ENCODE measurements at regions of chr17 and their contacts with region 1.

Region 1: DNA sequence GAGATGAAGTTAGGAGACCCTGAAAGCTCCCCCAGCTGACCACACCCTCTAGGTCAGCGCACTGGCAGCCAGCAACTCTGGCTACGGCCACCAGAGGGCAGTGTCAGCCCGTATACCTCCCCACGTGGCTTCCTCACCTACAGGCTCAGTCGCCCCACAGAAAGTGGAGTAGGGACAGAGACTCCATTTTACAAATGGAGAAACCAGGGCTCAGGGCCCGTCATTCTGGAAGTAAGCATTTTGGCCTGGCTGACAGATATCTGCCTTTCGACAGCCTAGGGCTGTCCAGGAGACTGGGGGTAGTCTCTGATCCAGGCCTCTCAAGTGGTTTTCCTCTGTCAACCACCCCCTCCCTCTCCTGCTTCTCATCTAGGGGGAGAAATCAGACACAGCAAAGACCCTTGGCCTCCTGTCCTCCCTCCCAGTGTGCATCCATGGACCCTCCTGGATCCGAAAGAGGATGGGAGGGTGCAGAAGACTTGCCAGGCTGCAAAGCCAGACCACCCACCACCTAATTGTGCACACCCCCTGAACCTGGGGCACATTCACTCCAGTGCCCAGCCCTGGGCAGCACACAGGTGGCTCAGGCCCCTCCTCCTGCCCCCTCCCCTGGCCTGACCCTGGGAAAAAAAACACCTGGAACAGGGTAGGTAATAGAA is 3.8 kb upstream of the HAP1 start:
- ATAC-seq: peak; percentile 57 to 82 (median 68)
- H3K4me3 ChIP-seq: peak overlapping the region in 1 of 5 donors; percentile 2
- H3K27ac ChIP-seq: no peak overlapping the region
- H3K4me1 ChIP-seq: peaks cover 3 to 7% of the 10 kb centered on the region in 2 donors

Region 2: GRCh38 chr17:41464682-41465081 is 273.5 kb before region 1 on chr17:
- in situ Hi-C with region 1: no loop called
- ATAC-seq: peak in 3 of 8 experiments; percentile 29 to 99 (median 65)
- H3K4me3 ChIP-seq: no peak overlapping the region
- H3K27ac ChIP-seq: no peak overlapping the region
- H3K4me1 ChIP-seq: no peaks in the 10 kb centered on the region

Region 3: GRCh38 chr17:41792845-41793783 is 54.9 kb after region 1 on chr17:
- in situ Hi-C with region 1: loop called in 1 of 9 experiments (anchors 10 kb)
- ATAC-seq: peak; percentile 57 to 92 (median 88)
- H3K4me3 ChIP-seq: no peak overlapping the region
- H3K27ac ChIP-seq: peak overlapping the region in 1 of 2 donors; percentile 57
- H3K4me1 ChIP-seq: peaks cover 18 to 19% of the 10 kb centered on the region in 2 donors

Region 4: GRCh38 chr17:41801374-41802271 is 63.4 kb after region 1 on chr17:
- in situ Hi-C with region 1: loop called in 3 of 9 experiments (anchors 5 to 10 kb)
- ATAC-seq: peak; percentile 44 to 81 (median 74)
- H3K4me3 ChIP-seq: no peak overlapping the region
- H3K27ac ChIP-seq: no peak overlapping the region
- H3K4me1 ChIP-seq: peaks cover 0 to 9% of the 10 kb centered on the region in 2 donors

Region 5: GRCh38 chr17:41835800-41836549 is 97.8 kb after region 1 on chr17 and contains the start of gene NT5C3B:
- in situ Hi-C with region 1: loop called in 1 of 9 experiments (anchors 25 kb)
- ATAC-seq: peak; percentile 71 to 93 (median 89)
- H3K4me3 ChIP-seq: peak within 1 kb of the TSS; percentile 74 to 99 (median 87)
- H3K27ac ChIP-seq: peak within 1 kb of the TSS; percentile 56 to 78
- H3K4me1 ChIP-seq: peaks cover 8 to 10% of the 10 kb centered on the region in 2 donors
- total RNA-seq, gene NT5C3B: 55.9 to 126 (median 104) TPM

Region 6: GRCh38 chr17:42120770-42121769 is 382.9 kb after region 1 on chr17 and contains the start of gene KAT2A:
- in situ Hi-C with region 1: loop called in 2 of 9 experiments (anchors 25 kb)
- ATAC-seq: peak; percentile 84 to 96 (median 92)
- H3K4me3 ChIP-seq: peak within 1 kb of the TSS; percentile 71 to 94 (median 77)
- H3K27ac ChIP-seq: peak within 1 kb of the TSS; percentile 66 to 87
- H3K4me1 ChIP-seq: peaks cover 11 to 19% of the 10 kb centered on the region in 2 donors
- total RNA-seq, gene KAT2A: 9.1 to 48.3 (median 19.2) TPM